Transverse colon (tissue), 4 donors: ENCODE measurements at regions of chr18 and their contacts with region 1.

Region 1: DNA sequence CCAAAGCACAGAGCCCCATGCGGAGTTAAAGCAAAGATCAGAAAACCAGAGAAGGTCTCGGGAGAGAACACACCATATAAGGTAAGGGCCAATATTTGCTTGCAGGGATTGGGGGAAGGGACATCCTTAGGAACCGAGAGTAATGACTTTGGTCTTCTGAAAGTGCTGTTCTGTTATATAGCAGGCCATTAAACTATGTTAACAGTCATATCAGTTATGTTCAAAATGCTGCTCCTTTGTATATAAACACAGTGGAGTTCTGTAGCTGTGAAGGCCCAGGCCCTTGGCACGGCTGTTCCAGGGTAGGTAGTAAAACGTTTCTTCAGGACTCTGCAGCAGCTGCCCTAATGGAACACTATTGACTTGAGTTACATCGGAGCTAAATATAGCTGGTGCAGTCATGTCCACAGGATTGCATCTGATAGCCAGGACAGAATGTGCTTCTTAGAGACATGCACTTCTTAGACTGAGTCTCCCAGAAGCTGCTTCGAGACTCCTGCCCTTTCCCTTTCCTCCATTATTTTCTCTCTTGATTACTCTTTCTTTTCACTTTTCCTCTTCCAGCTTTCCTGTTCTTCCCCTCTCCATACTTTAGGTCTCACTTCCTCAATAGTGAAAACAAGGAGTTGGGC is 122.4 kb downstream of the SETBP1 start:
- DNase-seq: peak; percentile 86
- H3K4me3 ChIP-seq: peak overlapping the region in 1 of 4 donors; percentile 14
- H3K27ac ChIP-seq: peak overlapping the region; percentile 85 to 91 (median 90)
- H3K4me1 ChIP-seq: peaks cover 44 to 82% (median 62%) of the 10 kb centered on the region in 4 donors
- H3K27me3 ChIP-seq: no peaks in the 10 kb centered on the region
- CTCF ChIP-seq: no peak
- EP300 ChIP-seq: peak; percentile 97
- POLR2A ChIP-seq: peak; percentile 74

Region 2: DNA sequence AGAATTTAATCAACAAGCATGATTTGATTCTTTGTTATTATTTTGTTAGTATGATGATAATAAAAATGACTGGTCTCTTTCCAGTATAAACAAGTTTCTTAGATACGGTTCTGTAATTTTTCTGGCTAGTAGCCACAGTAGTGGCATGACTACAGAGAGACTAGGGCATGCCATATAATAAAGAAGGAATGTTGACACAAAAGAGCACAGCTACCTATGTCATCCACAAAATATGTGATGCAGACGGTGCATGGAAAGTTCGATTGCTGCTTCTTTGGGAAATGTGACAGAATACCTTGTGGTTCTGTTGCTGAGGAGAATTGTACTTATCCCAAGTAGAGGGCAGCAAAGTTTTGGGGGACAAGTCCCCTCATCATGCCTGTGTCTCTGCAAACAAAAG is 148.6 kb before region 1 on chr18:
- in situ Hi-C with region 1: no loop called
- intact Hi-C with region 1: no loop called
- DNase-seq: no peak
- H3K4me3 ChIP-seq: no peak overlapping the region
- H3K27ac ChIP-seq: peak overlapping the region in 1 of 4 donors; percentile 23
- H3K4me1 ChIP-seq: peaks cover 0 to 4% (median 0%) of the 10 kb centered on the region in 4 donors
- H3K27me3 ChIP-seq: no peaks in the 10 kb centered on the region
- CTCF ChIP-seq: no peak
- EP300 ChIP-seq: no peak
- POLR2A ChIP-seq: no peak

Region 3: DNA sequence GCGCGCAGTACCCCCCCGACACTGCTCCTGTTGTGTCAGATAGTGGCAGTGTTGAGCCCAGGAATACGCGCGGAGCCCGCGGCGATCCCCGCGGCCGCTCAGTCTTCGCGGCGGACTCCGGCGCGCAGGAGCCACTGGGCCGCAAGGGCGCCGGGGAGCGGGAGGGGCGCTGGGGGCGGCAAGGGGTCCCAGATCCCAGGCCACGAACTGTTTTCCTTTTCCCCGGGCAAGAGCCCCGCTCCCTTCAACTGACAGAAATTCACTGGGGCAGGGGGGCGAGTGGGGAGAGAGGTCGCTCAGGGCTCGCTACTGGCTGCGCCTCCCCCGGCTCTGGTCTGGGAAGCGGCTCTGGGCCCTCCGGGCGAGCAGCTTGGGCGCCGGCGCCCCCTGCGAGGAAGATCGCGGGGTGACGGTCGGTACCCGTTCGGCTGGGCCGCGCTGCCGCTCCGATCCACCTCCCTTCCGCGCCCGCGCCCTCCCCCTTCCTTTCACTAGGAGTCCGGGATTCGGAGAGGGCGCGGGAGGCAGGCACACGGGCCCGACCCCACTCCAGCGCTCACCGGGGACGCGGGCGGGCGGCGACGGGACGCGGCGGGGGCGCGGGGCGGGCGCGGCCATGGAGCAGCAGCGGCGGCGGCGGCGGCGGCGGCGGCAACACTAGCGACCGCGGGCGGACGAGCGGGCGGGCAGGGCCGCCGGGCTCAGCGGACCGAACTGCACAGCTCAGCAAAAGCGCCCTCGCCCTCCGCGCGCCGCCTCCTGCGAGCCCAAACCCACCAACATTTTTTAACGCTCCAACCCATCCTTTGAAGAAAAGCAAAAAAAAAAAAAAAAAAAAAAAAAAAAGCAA is 123.9 kb before region 1 on chr18:
- in situ Hi-C with region 1: loop called in 1 of 4 experiments (anchors 25 kb)
- intact Hi-C with region 1: loop called (anchors 10 kb)
- DNase-seq: peak; percentile 90
- H3K4me3 ChIP-seq: peak overlapping the region; percentile 39 to 87 (median 80)
- H3K27ac ChIP-seq: peak overlapping the region; percentile 95 to 99 (median 98)
- H3K4me1 ChIP-seq: peaks cover 0 to 9% (median 7%) of the 10 kb centered on the region in 4 donors
- H3K27me3 ChIP-seq: no peaks in the 10 kb centered on the region
- CTCF ChIP-seq: peak; percentile 61 to 83 (median 69)
- EP300 ChIP-seq: no peak
- POLR2A ChIP-seq: peak; percentile 89

Region 4: GRCh38 chr18:44733069-44733753 is 69.9 kb before region 1 on chr18:
- in situ Hi-C with region 1: loop called in 1 of 4 experiments (anchors 10 kb)
- intact Hi-C with region 1: no loop called
- DNase-seq: no peak
- H3K4me3 ChIP-seq: no peak overlapping the region
- H3K27ac ChIP-seq: peak overlapping the region; percentile 9 to 68 (median 30)
- H3K4me1 ChIP-seq: peaks cover 34 to 63% (median 37%) of the 10 kb centered on the region in 4 donors
- H3K27me3 ChIP-seq: no peaks in the 10 kb centered on the region
- CTCF ChIP-seq: no peak
- EP300 ChIP-seq: no peak
- POLR2A ChIP-seq: no peak

Region 5: DNA sequence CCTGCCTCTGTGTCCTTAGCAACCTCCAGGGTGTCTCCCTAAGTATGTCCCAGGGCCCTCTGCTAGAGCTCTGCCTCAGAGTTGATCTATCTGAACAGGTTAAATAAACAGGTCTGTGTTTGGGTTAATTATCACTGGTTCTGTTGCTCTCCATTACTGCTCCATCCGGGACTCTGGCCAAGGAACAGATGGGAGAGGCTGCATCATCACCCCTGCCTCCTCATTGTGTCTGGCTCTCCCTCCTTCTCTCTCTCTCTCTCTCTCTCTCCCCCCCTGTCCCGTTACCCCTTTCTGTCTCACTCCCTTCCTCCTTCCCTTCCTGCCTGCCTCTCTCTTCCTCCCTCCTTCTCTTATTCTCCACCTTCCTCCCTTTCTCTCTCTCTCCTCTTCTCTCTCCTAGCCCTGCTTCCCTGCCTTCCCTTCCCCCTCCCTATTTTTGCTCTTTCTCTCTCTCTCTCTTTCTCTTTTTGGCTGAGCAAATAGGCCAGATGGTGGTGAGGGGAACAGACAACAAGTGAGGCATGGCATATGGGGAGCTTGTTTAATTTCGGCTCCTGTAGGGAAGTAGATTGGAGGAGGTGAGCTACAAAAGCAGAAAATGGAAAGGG is 60.3 kb before region 1 on chr18:
- in situ Hi-C with region 1: loop called in 1 of 4 experiments (anchors 10 kb)
- intact Hi-C with region 1: loop called (anchors 5 kb)
- DNase-seq: no peak
- H3K4me3 ChIP-seq: no peak overlapping the region
- H3K27ac ChIP-seq: peak overlapping the region; percentile 51 to 71 (median 63)
- H3K4me1 ChIP-seq: peaks cover 0 to 43% (median 24%) of the 10 kb centered on the region in 4 donors
- H3K27me3 ChIP-seq: no peaks in the 10 kb centered on the region
- CTCF ChIP-seq: no peak
- EP300 ChIP-seq: no peak
- POLR2A ChIP-seq: no peak